Activated naive CD8-positive, alpha-beta T cell treated with anti-CD3 and anti-CD28 coated beads, Interleukin-2, amount 10 ng/mL, durations not matched to agents 7 days and 5 days (primary cell): ENCODE measurements at regions of chr12 and their contacts with region 1.

Region 1: GRCh38 chr12:62435303-62436163 is 31.1 kb upstream of the MON2 start:
- DNase-seq: peak; percentile 54
- ATAC-seq: peak; percentile 89
- H3K4me3 Mint-ChIP-seq: peak overlapping the region; percentile 85
- H3K27ac Mint-ChIP-seq: peak overlapping the region; percentile 32
- H3K4me1 Mint-ChIP-seq: peaks cover 22% of the 10 kb centered on the region
- H3K27me3 Mint-ChIP-seq: peaks cover 63% of the 10 kb centered on the region

Region 2: DNA sequence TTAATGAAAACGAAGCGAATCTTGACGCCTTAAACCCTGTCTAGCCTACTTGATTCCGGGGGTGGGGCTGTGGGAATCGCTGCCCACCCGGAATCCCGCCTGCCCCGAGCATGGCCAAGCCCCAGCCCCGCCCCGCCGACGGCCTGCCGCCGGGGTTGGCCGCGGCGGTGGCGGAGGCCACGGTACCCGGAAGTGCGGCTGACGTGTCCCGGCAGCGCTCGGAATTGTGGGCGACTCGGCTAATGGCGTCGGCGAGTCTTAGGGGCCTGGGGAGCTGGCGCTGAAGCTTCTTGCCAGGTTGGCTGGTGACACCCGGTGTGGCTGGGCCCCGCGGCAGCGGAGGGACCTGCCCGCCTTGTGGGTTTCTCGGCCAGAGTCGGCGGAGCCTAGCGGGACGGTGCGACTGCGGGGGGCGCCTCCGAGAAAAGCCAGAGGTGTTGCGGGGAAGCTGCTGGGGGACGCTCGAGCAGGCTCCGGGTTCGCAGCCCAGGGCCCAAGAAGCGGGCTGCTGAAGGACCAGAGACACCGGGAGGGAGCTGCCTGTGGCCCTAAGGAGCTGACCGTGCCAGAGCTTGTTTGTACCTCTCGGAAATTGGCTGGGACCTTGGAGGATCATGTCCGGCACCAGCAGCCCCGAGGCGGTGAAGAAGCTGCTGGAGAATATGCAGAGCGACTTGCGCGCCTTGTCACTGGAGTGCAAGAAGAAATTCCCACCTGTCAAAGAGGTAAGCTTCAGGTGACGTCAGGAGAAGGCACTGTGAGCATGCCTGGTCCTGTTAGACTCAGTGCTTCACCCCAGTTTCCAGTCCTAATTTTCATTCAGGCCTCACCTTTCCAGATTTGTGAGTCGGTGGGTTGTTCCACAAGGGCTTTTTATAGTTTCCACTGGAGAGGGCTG is 31.3 kb after region 1 on chr12 and contains the start of gene MON2:
- POLR2A ChIA-PET with region 1: interaction called, 10 read pairs
- DNase-seq: peak; percentile 91
- ATAC-seq: peak; percentile 97
- H3K4me3 Mint-ChIP-seq: peak within 1 kb of the TSS; percentile 80
- H3K27ac Mint-ChIP-seq: peak within 1 kb of the TSS; percentile 90
- H3K4me1 Mint-ChIP-seq: peaks cover 16% of the 10 kb centered on the region
- H3K27me3 Mint-ChIP-seq: peaks cover 2% of the 10 kb centered on the region
- total RNA-seq, gene MON2: 50.3 to 57.8 TPM